ENCODE measurements at regions of chr20 and their contacts with region 1.

Region 1: GRCh38 chr20:53939572-53940359 is 130.6 kb downstream of the BCAS1 start:
- DNase-seq: peak; percentile 97
- H3K4me3 ChIP-seq: peak overlapping the region; percentile 62
- H3K27ac ChIP-seq: peak overlapping the region; percentile 71
- H3K4me1 ChIP-seq: peaks cover 79% of the 10 kb centered on the region
- CTCF ChIP-seq: peak; percentile 98

Region 2: GRCh38 chr20:53001498-53002301 is 938.1 kb before region 1 on chr20:
- CTCF ChIA-PET with region 1: no interaction called
- POLR2A ChIA-PET with region 1: interaction called, 3 read pairs
- intact Hi-C with region 1: loop called (anchors 10 kb)
- DNase-seq: peak; percentile 91
- H3K4me3 ChIP-seq: peak overlapping the region; percentile 63
- H3K27ac ChIP-seq: peak overlapping the region; percentile 100
- H3K4me1 ChIP-seq: peaks cover 80% of the 10 kb centered on the region
- CTCF ChIP-seq: no peak

Region 3: GRCh38 chr20:53413186-53413631 is 526.6 kb before region 1 on chr20:
- CTCF ChIA-PET with region 1: no interaction called
- POLR2A ChIA-PET with region 1: interaction called, 5 read pairs
- intact Hi-C with region 1: loop called (anchors 1 kb)
- DNase-seq: peak; percentile 76
- H3K4me3 ChIP-seq: no peak overlapping the region
- H3K27ac ChIP-seq: no peak overlapping the region
- H3K4me1 ChIP-seq: no peaks in the 10 kb centered on the region
- CTCF ChIP-seq: peak; percentile 80

Region 4: GRCh38 chr20:53594068-53595017 is 345.4 kb before region 1 on chr20:
- CTCF ChIA-PET with region 1: no interaction called
- POLR2A ChIA-PET with region 1: interaction called, 10 read pairs
- intact Hi-C with region 1: no loop called
- DNase-seq: peak; percentile 96
- H3K4me3 ChIP-seq: peak overlapping the region; percentile 100
- H3K27ac ChIP-seq: peak overlapping the region; percentile 95
- H3K4me1 ChIP-seq: peaks cover 30% of the 10 kb centered on the region
- CTCF ChIP-seq: peak; percentile 59

Region 5: GRCh38 chr20:53926428-53927028 is 13.2 kb before region 1 on chr20:
- CTCF ChIA-PET with region 1: interaction called, 9 read pairs
- POLR2A ChIA-PET with region 1: interaction called, 102 read pairs
- intact Hi-C with region 1: no loop called
- DNase-seq: peak; percentile 95
- H3K4me3 ChIP-seq: peak overlapping the region; percentile 59
- H3K27ac ChIP-seq: peak overlapping the region; percentile 99
- H3K4me1 ChIP-seq: peaks cover 95% of the 10 kb centered on the region
- CTCF ChIP-seq: no peak